Activated CD8-positive, alpha-beta T cell treated with anti-CD3 and anti-CD28 coated beads for 36 hours (primary cell): ENCODE measurements at regions of chr4 and their contacts with region 1.

Region 1: GRCh38 chr4:38675146-38676121 is 11.4 kb downstream of the KLF3 start:
- DNase-seq: peak; percentile 95
- ATAC-seq: peak; percentile 65
- H3K4me3 Mint-ChIP-seq: peak overlapping the region; percentile 46
- H3K27ac Mint-ChIP-seq: peak overlapping the region; percentile 66
- H3K4me1 Mint-ChIP-seq: peaks cover 82% of the 10 kb centered on the region
- H3K27me3 Mint-ChIP-seq: no peaks in the 10 kb centered on the region
- CTCF ChIP-seq: peak; percentile 87

Region 2: GRCh38 chr4:38132107-38132673 is 543.2 kb before region 1 on chr4:
- CTCF ChIA-PET with region 1: interaction called, 5 read pairs
- POLR2A ChIA-PET with region 1: no interaction called
- intact Hi-C with region 1: loop called (anchors 5 kb)
- DNase-seq: peak; percentile 90
- ATAC-seq: peak; percentile 64
- H3K4me3 Mint-ChIP-seq: peak overlapping the region; percentile 53
- H3K27ac Mint-ChIP-seq: peak overlapping the region; percentile 87
- H3K4me1 Mint-ChIP-seq: peaks cover 62% of the 10 kb centered on the region
- H3K27me3 Mint-ChIP-seq: no peaks in the 10 kb centered on the region
- CTCF ChIP-seq: no peak

Region 3: DNA sequence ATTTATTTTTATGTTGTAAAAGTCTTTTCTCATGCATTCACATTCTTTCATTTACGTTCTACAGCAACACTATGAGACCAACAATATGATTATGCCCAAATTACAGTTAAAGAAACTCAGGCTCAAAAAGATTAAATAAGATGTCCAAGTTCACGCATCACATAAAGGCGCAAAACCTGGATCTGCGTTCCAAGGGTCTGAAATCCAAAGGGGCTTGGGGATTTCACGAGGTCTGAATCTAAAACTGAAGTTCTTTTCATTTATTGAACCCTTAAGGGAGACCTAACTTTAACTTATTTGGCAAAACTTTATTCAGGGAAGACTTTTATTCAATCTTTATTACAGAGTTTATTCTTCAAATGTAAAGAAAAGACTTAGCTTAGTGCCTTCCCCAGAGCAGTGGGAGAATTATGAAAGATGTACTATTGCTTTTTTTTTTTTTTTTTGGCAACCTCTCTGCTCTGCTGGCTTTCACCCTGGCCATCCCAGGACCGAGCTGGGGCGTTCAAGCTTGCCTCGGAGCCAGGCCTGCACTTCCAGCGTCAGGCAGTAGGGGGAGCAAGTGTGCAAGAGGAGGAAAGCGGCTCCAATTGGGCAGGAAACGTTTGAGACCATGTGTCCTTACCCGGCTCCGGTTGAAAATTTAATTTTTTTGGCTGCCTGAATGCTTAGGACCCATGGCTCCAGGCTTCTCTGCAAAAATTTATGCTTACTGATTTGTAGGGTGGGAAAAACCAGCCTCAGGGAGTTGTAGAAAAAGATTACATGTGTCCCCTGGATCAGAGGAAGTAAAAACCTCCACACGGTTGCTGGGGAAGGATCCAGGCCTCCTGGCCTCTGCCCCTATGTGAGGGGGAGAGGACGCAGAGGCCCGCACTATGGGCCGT is 355.7 kb before region 1 on chr4:
- CTCF ChIA-PET with region 1: interaction called, 67 read pairs
- POLR2A ChIA-PET with region 1: interaction called, 3 read pairs
- intact Hi-C with region 1: loop called (anchors 5 kb)
- DNase-seq: peak; percentile 96
- ATAC-seq: peak; percentile 86
- H3K4me3 Mint-ChIP-seq: peak overlapping the region; percentile 76
- H3K27ac Mint-ChIP-seq: peak overlapping the region; percentile 89
- H3K4me1 Mint-ChIP-seq: peaks cover 39% of the 10 kb centered on the region
- H3K27me3 Mint-ChIP-seq: no peaks in the 10 kb centered on the region
- CTCF ChIP-seq: peak; percentile 96

Region 4: GRCh38 chr4:38548256-38548655 is 127.2 kb before region 1 on chr4:
- CTCF ChIA-PET with region 1: no interaction called
- POLR2A ChIA-PET with region 1: no interaction called
- intact Hi-C with region 1: no loop called
- DNase-seq: no peak
- ATAC-seq: no peak
- H3K4me3 Mint-ChIP-seq: no peak overlapping the region
- H3K27ac Mint-ChIP-seq: no peak overlapping the region
- H3K4me1 Mint-ChIP-seq: no peaks in the 10 kb centered on the region
- H3K27me3 Mint-ChIP-seq: no peaks in the 10 kb centered on the region
- CTCF ChIP-seq: no peak

Region 5: DNA sequence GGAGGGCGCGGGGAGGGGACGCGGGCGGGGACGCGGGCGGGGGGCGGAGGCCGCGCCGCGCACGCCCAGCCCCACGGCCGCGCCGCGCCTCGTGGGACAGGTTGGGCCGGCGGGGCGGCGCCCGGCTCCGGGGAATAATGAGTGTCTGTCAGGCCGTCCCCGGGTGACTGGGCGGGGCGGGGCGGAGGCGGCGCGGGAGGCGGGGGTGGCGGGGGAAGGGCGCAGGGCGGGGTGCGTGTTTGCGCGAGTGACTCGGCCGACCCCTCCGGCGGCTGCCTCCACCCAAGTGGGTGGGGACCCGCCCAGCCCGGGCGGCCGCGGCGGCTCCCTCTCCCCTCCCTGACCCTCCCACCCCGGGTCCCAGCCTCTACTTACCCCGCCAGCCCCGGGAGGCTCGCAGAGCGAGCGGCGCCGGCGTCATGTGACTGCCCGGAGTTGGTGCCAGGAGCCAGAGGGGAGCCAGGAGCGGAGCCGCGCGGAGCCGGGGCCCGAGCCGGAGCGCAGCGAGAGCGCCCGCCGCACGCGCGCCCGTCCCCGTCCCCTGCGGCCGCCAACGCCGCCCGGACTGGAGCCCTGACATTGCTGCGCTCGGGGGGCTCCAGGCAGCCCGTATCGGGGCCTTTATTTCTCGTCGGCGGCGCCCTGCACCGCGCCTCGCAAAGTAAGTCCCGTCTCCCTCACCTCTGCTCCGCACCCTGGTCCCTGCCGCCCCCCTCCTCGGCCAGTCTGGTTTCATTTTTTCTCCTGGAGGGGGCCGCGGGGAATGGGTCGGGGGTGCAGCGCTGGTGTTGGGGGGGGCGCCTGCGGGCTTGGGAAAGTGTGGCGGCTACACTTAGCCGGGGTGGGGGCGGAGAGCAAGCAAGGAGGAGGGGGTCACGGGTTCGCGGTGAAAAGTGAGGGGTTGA is 11.4 kb before region 1 on chr4 and contains the start of gene KLF3:
- CTCF ChIA-PET with region 1: interaction called, 14 read pairs
- POLR2A ChIA-PET with region 1: interaction called, 3 read pairs
- intact Hi-C with region 1: no loop called
- DNase-seq: peak; percentile 68
- ATAC-seq: peak; percentile 64
- H3K4me3 Mint-ChIP-seq: peak within 1 kb of the TSS; percentile 79
- H3K27ac Mint-ChIP-seq: peak within 1 kb of the TSS; percentile 89
- H3K4me1 Mint-ChIP-seq: peaks cover 63% of the 10 kb centered on the region
- H3K27me3 Mint-ChIP-seq: no peaks in the 10 kb centered on the region
- CTCF ChIP-seq: no peak
- total RNA-seq, gene KLF3: 5.5 to 6.0 TPM

Region 6: DNA sequence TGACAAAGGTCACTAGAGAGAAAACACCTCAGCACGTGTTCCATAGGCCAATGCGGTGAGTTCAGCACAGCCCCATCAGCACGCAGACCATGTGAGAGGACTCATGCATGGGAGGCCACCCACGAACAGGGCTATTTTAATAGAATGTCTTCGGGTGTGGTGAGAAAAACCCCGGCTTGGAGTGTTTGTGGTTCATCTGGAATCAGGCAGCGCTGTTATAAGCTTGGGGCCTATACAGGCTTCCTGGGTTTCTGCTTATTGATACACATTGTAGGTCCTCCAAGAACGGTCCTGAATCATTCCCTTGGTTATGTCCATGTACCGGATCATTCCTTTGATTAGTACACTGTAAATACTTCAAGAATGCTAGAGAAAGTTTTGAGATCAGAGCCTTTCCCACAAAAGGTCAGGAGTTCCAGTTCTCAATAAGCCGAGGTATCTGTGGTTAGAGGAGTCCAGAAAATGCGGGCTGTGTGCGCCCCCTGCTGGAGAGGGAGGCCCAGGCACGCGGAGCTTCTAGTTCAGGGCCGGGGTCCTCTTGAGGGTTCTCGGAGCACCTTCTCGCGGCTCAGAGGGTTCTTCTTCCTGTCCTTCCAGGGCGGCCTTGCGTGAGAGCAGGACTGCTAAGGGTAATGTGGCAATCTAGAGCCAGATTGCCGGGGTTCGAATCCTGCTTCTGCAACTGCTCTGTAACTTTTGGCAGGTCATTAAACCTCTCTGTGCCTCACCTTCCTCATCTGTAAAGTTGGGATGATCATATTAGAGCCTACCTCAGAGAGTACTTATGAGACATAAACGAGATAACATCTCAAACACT is 55.6 kb after region 1 on chr4:
- CTCF ChIA-PET with region 1: interaction called, 29 read pairs
- POLR2A ChIA-PET with region 1: no interaction called
- intact Hi-C with region 1: loop called (anchors 5 kb)
- DNase-seq: peak; percentile 91
- ATAC-seq: peak; percentile 93
- H3K4me3 Mint-ChIP-seq: no peak overlapping the region
- H3K27ac Mint-ChIP-seq: peak overlapping the region; percentile 64
- H3K4me1 Mint-ChIP-seq: peaks cover 15% of the 10 kb centered on the region
- H3K27me3 Mint-ChIP-seq: peaks cover 2% of the 10 kb centered on the region
- CTCF ChIP-seq: peak; percentile 99